A549 (cell line): ENCODE measurements at regions of chr1 and their contacts with region 1.

Region 1: GRCh38 chr1:21926814-21927532 is 10.1 kb downstream of the HSPG2 start:
- DNase-seq: no peak
- ATAC-seq: peak; percentile 3 to 12; a peak in 4 of 6 replicates
- H3K4me3 ChIP-seq: no peak overlapping the region
- H3K27ac ChIP-seq: peak overlapping the region; percentile 98 to 100
- H3K4me1 ChIP-seq: peaks cover 100% of the 10 kb centered on the region
- CTCF ChIP-seq: no peak
- EP300 ChIP-seq: no peak
- POLR2A ChIP-seq: no peak
- RAD21 ChIP-seq: no peak

Region 2: GRCh38 chr1:21937372-21938221 is 10.6 kb after region 1 on chr1:
- CTCF ChIA-PET with region 1: interaction called, 18 read pairs
- POLR2A ChIA-PET with region 1: interaction called, 5 read pairs
- DNase-seq: peak in 1 of 2 experiments; percentile 74
- ATAC-seq: peak; percentile 58 to 74
- H3K4me3 ChIP-seq: peak overlapping the region; percentile 76
- H3K27ac ChIP-seq: peak overlapping the region; percentile 96 to 100
- H3K4me1 ChIP-seq: peaks cover 64% of the 10 kb centered on the region
- CTCF ChIP-seq: no peak
- EP300 ChIP-seq: no peak
- POLR2A ChIP-seq: no peak
- RAD21 ChIP-seq: no peak